ENCODE measurements at regions of chr2 and their contacts with region 1.

Region 1: GRCh38 chr2:232521959-232522622 is 1.9 kb downstream of the PRSS56 start:
- DNase-seq: peak; percentile 63
- H3K4me3 Mint-ChIP-seq: no peak overlapping the region
- H3K27ac Mint-ChIP-seq: no peak overlapping the region
- H3K4me1 Mint-ChIP-seq: peaks cover 13% of the 10 kb centered on the region
- H3K27me3 Mint-ChIP-seq: peaks cover 39% of the 10 kb centered on the region

Region 2: DNA sequence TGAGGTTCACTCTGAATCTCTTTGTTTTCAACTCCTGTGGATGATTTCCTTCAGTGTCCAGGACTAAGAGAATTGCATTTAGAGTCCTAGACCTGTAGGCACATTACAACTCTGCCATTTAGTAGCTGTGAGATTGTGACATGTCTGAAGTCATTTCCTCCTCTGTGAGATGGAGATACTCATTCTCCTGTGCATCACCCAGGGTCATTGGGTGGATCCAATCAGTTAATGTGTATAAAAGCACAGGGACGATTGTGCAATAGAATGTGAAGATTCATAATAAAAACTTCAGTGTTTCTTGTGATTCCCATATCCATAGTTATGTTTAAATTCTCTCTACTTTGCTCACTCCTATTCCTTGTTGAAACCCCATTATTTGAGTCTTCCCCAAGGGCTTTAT is 447.0 kb before region 1 on chr2:
- CTCF ChIA-PET with region 1: no interaction called
- intact Hi-C with region 1: no loop called
- DNase-seq: no peak
- H3K4me3 Mint-ChIP-seq: no peak overlapping the region
- H3K27ac Mint-ChIP-seq: no peak overlapping the region
- H3K4me1 Mint-ChIP-seq: peaks cover 46% of the 10 kb centered on the region
- H3K27me3 Mint-ChIP-seq: no peaks in the 10 kb centered on the region

Region 3: DNA sequence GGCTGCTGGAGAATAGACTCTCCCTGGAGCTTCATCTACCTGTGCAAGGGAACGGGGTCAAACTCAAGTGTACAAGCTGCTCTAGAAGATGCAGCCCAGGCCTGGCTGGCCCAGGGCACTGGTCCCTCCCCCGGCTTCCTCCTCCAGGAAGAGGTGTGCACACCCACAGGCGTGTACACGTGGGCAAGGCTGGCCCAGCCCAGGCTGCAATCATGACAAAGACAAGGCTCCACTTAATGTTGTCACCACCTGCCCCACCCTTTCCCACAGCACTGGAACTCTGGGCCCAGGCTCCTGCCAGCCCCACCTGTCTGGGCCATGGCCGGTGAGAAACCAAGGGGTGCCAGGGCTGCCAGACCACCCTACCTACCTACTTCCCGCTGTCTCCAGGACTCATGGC is 173.2 kb before region 1 on chr2:
- CTCF ChIA-PET with region 1: no interaction called
- intact Hi-C with region 1: loop called (anchors 10 kb)
- DNase-seq: peak; percentile 6
- H3K4me3 Mint-ChIP-seq: no peak overlapping the region
- H3K27ac Mint-ChIP-seq: no peak overlapping the region
- H3K4me1 Mint-ChIP-seq: peaks cover 9% of the 10 kb centered on the region
- H3K27me3 Mint-ChIP-seq: peaks cover 18% of the 10 kb centered on the region

Region 4: DNA sequence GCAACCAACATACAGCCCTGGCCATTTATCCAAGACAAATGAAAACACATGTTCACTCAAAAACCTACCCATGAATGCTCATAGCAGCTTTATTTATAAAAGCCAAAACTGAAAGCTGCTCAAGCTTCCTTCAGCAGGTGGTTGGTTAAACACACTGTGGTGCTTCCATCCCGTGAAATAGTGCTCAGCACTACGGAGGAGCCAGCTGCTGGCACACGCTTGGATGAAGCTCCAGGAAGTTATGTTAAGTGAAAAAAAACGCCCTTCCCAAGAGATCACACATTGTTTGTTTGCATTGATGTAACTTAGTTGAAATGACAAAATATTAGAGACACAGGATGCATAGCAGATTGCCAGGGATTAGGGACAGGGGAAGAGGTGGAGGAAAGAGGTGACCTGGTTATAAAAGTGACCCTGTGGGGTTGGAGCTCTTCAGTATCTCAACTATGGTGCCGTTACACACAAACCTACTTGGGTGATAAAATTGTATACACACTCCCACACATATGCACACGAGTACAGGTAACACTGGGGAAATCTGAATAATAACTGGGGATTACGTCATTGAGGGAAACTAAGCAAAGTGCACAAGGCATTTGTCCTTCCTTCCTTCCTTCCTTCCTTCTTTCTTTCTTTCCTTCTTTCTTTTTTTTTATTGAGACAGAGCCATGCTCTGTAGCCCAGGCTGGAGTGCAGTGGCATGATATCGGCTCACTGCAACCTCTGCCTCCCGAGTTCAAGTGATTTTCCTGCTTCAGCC is 121.7 kb before region 1 on chr2:
- CTCF ChIA-PET with region 1: no interaction called
- intact Hi-C with region 1: no loop called
- DNase-seq: no peak
- H3K4me3 Mint-ChIP-seq: no peak overlapping the region
- H3K27ac Mint-ChIP-seq: no peak overlapping the region
- H3K4me1 Mint-ChIP-seq: no peaks in the 10 kb centered on the region
- H3K27me3 Mint-ChIP-seq: peaks cover 7% of the 10 kb centered on the region

Region 5: DNA sequence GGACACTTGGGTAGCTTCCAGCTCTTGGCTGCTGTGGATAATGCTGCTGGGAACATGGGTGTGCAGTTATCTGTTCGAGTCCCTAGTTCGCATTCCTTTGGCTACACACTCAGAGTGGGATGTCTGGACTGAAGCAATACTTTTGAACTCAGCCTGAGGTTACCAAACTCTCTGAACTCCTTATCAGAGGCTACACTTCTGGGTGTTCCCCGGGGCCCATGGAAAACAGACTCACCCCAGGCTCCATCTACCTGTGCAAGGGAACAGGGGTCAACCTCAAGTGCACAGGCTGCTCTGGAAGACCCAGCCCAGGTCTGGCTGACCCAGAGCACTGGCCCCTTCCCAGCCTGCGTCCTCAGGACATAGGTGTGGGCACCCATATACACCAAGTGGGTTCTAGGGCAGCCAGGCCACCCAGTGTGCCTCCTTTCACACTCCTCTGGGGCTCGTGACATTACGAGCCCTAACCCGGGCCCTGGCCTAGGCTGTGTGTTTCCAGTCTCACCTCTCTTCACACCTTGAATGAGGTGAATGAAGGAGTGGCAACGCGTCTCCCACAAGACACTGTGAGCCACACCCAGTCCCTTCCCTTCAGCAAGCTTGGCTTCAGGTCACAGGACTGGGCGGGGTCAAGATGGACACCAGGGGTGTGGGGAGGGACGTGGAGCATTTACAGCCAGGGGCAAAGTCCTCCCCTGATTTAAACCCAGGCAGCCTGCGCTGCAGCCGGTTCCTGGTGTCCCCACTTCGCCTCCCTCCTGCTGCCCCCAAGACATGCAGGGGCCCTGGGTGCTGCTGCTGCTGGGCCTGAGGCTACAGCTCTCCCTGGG is 66.5 kb before region 1 on chr2 and contains the start of gene ALPI:
- CTCF ChIA-PET with region 1: no interaction called
- intact Hi-C with region 1: no loop called
- DNase-seq: no peak
- H3K4me3 Mint-ChIP-seq: no peak within 1 kb of the TSS
- H3K27ac Mint-ChIP-seq: no peak within 1 kb of the TSS
- H3K4me1 Mint-ChIP-seq: no peaks in the 10 kb centered on the region
- H3K27me3 Mint-ChIP-seq: peaks cover 11% of the 10 kb centered on the region
- total RNA-seq, gene ALPI: not detected

Measured in activated naive CD4-positive, alpha-beta T cell treated with anti-CD3 and anti-CD28 coated beads for 36 hours (primary cell).